ENCODE measurements at regions of chr2 and their contacts with region 1.

Region 1: GRCh38 chr2:150610671-150611279 is 123.3 kb upstream of the RND3 start:
- DNase-seq: no peak
- ATAC-seq: peak in 1 of 8 donors; percentile 57
- H3K4me3 ChIP-seq: no peak overlapping the region
- H3K27ac ChIP-seq: no peak overlapping the region
- H3K4me1 ChIP-seq: peaks cover 0 to 17% (median 0%) of the 10 kb centered on the region in 9 donors
- H3K27me3 ChIP-seq: no peaks in the 10 kb centered on the region
- CTCF ChIP-seq: peak; percentile 24 to 63 (median 49)

Region 2: GRCh38 chr2:149597668-149598326 is 1013.0 kb before region 1 on chr2:
- intact Hi-C with region 1: loop called in 6 of 10 experiments (anchors 5 to 10 kb)
- DNase-seq: peak in 1 of 2 donors; percentile 42
- ATAC-seq: peak; percentile 76 to 95 (median 92)
- H3K4me3 ChIP-seq: peak overlapping the region in 7 of 10 donors; percentile 8 to 38 (median 26)
- H3K27ac ChIP-seq: no peak overlapping the region
- H3K4me1 ChIP-seq: peaks cover 0 to 11% (median 0%) of the 10 kb centered on the region in 9 donors
- H3K27me3 ChIP-seq: no peaks in the 10 kb centered on the region
- CTCF ChIP-seq: peak; percentile 61 to 90 (median 81)

Region 3: GRCh38 chr2:149799013-149799705 is 811.6 kb before region 1 on chr2:
- intact Hi-C with region 1: loop called in 1 of 10 experiments (anchors 10 kb)
- DNase-seq: no peak
- ATAC-seq: peak in 7 of 8 donors; percentile 50 to 88 (median 77)
- H3K4me3 ChIP-seq: no peak overlapping the region
- H3K27ac ChIP-seq: no peak overlapping the region
- H3K4me1 ChIP-seq: no peaks in the 10 kb centered on the region
- H3K27me3 ChIP-seq: no peaks in the 10 kb centered on the region
- CTCF ChIP-seq: peak in 7 of 9 donors; percentile 37 to 64 (median 53)

Region 4: GRCh38 chr2:150425121-150425955 is 185.4 kb before region 1 on chr2:
- intact Hi-C with region 1: loop called in 6 of 10 experiments (anchors 2 to 10 kb)
- DNase-seq: peak; percentile 20 to 47
- ATAC-seq: peak; percentile 74 to 95 (median 94)
- H3K4me3 ChIP-seq: peak overlapping the region in 7 of 10 donors; percentile 19 to 45 (median 39)
- H3K27ac ChIP-seq: peak overlapping the region in 8 of 10 donors; percentile 18 to 73 (median 54)
- H3K4me1 ChIP-seq: peaks cover 0 to 4% (median 0%) of the 10 kb centered on the region in 9 donors
- H3K27me3 ChIP-seq: no peaks in the 10 kb centered on the region
- CTCF ChIP-seq: peak in 8 of 9 donors; percentile 29 to 56 (median 46)

Region 5: GRCh38 chr2:150438654-150439053 is 172.1 kb before region 1 on chr2:
- intact Hi-C with region 1: no loop called
- DNase-seq: no peak
- ATAC-seq: no peak
- H3K4me3 ChIP-seq: no peak overlapping the region
- H3K27ac ChIP-seq: no peak overlapping the region
- H3K4me1 ChIP-seq: no peaks in the 10 kb centered on the region
- H3K27me3 ChIP-seq: no peaks in the 10 kb centered on the region
- CTCF ChIP-seq: no peak

Region 6: GRCh38 chr2:150495993-150496627 is 114.7 kb before region 1 on chr2:
- intact Hi-C with region 1: loop called in 1 of 10 experiments (anchors 5 kb)
- DNase-seq: no peak
- ATAC-seq: no peak
- H3K4me3 ChIP-seq: no peak overlapping the region
- H3K27ac ChIP-seq: no peak overlapping the region
- H3K4me1 ChIP-seq: no peaks in the 10 kb centered on the region
- H3K27me3 ChIP-seq: no peaks in the 10 kb centered on the region
- CTCF ChIP-seq: no peak

Region 7: DNA sequence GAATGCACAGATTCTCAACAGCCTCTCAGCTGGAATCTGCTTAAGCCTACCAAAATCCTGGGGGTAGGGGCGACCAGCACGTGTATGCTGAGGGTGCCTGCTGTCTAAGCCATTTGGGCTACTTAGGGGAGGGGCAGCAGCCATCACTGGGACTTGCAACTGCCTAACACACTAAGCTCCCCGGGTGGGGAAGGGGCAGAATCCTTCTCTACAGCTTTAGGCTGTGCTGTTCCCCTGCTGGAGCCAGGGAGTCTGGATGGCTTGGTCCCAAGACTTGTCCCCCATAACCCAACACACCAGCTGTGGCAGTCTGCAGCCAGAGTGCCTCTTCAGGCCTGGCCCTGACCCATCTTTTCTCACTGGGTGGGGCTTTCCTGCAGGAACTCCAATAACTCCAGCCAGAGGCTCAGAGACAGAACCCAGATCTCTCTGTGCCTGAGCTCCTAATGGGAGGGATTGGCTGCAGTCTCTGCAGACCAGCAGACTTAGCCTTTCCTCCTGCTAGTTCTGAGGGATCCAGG is 182.1 kb after region 1 on chr2:
- intact Hi-C with region 1: loop called in 1 of 10 experiments (anchors 5 kb)
- DNase-seq: peak in 1 of 2 donors; percentile 15
- ATAC-seq: peak in 1 of 8 donors; percentile 41
- H3K4me3 ChIP-seq: no peak overlapping the region
- H3K27ac ChIP-seq: no peak overlapping the region
- H3K4me1 ChIP-seq: peaks cover 0 to 25% (median 5%) of the 10 kb centered on the region in 9 donors
- H3K27me3 ChIP-seq: no peaks in the 10 kb centered on the region
- CTCF ChIP-seq: no peak

Region 8: DNA sequence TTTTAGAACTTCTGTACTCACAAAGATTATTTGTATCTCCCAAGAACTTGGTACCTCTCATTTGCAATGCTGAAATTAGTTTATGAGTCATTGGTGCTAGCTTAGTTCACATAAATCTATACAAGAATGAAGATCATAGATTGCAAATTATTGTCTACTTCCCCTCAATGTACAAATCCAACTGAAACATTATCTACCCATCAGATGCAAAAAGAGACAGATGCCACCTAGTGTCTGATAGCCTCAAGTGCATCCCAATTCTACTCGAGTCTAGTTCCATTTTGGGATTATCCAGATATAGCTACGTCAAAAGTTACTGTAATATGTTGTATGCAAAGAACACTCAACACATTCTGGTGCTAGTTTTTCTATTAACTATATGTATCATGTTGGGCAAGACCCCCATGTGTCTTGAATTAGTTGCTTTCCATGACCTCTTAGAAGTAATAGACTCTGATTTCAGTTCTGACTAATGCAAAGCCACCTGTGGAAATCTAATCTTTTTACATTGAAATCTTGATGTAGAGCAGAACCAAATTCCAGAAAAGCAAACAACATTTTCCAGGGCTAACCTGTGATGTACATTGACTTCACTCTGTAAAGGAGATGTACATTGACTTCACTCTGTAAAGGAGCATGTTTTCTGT is 440.9 kb after region 1 on chr2:
- intact Hi-C with region 1: loop called in 2 of 10 experiments (anchors 10 kb)
- DNase-seq: peak in 1 of 2 donors; percentile 6
- ATAC-seq: peak in 3 of 8 donors; percentile 51 to 55 (median 53)
- H3K4me3 ChIP-seq: no peak overlapping the region
- H3K27ac ChIP-seq: no peak overlapping the region
- H3K4me1 ChIP-seq: peaks cover 0 to 4% (median 0%) of the 10 kb centered on the region in 9 donors
- H3K27me3 ChIP-seq: no peaks in the 10 kb centered on the region
- CTCF ChIP-seq: peak; percentile 54 to 86 (median 81)

Measured in heart right ventricle (tissue), 16 donors.